B cell (primary cell): ENCODE measurements at regions of chr1 and their contacts with region 1.

Region 1: GRCh38 chr1:107804134-107804533 is 160.8 kb downstream of the VAV3 start:
- DNase-seq: peak; percentile 62
- ATAC-seq: peak; percentile 61
- H3K4me3 ChIP-seq: peak overlapping the region; percentile 35 to 76 (median 47)
- H3K4me3 Mint-ChIP-seq: peak overlapping the region; percentile 80
- H3K27ac ChIP-seq: peak overlapping the region; percentile 79 to 88
- H3K27ac Mint-ChIP-seq: peak overlapping the region; percentile 90
- H3K4me1 ChIP-seq: peaks cover 58 to 86% of the 10 kb centered on the region in 2 donors
- H3K4me1 Mint-ChIP-seq: peaks cover 91% of the 10 kb centered on the region
- H3K27me3 ChIP-seq: no peaks in the 10 kb centered on the region
- H3K27me3 Mint-ChIP-seq: no peaks in the 10 kb centered on the region
- CTCF ChIP-seq: no peak

Region 2: GRCh38 chr1:107789817-107790524 is 14.2 kb before region 1 on chr1:
- CTCF ChIA-PET with region 1: interaction called, 4 read pairs
- POLR2A ChIA-PET with region 1: interaction called, 3 read pairs
- intact Hi-C with region 1: loop called (anchors 1 kb)
- DNase-seq: no peak
- ATAC-seq: no peak
- H3K4me3 ChIP-seq: no peak overlapping the region
- H3K4me3 Mint-ChIP-seq: peak overlapping the region; percentile 4
- H3K27ac ChIP-seq: peak overlapping the region in 1 of 2 donors; percentile 12
- H3K27ac Mint-ChIP-seq: peak overlapping the region; percentile 55
- H3K4me1 ChIP-seq: peaks cover 84 to 94% of the 10 kb centered on the region in 2 donors
- H3K4me1 Mint-ChIP-seq: peaks cover 89% of the 10 kb centered on the region
- H3K27me3 ChIP-seq: no peaks in the 10 kb centered on the region
- H3K27me3 Mint-ChIP-seq: no peaks in the 10 kb centered on the region
- CTCF ChIP-seq: no peak

Region 3: DNA sequence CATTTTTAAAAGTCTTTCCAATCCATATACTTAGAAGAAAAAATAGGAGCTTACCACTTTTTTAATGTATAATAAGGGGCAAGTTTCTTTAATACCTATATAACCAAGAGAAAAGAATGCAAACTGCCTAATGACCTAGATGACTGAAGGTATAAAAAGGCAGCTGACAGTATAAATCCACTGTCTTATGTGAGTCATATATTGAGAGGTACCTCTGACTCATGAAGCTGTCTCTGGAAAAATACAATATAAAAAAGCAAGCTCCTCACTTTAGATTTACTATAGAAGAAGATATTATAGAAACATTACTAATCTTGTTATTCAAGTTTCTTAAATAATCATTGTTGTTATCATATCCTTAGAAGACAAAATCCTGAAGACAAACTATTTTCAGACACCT is 16.7 kb after region 1 on chr1:
- CTCF ChIA-PET with region 1: no interaction called
- POLR2A ChIA-PET with region 1: no interaction called
- intact Hi-C with region 1: loop called (anchors 2 kb)
- DNase-seq: no peak
- ATAC-seq: peak; percentile 21
- H3K4me3 ChIP-seq: no peak overlapping the region
- H3K4me3 Mint-ChIP-seq: no peak overlapping the region
- H3K27ac ChIP-seq: no peak overlapping the region
- H3K27ac Mint-ChIP-seq: no peak overlapping the region
- H3K4me1 ChIP-seq: peaks cover 19 to 36% of the 10 kb centered on the region in 2 donors
- H3K4me1 Mint-ChIP-seq: peaks cover 64% of the 10 kb centered on the region
- H3K27me3 ChIP-seq: no peaks in the 10 kb centered on the region
- H3K27me3 Mint-ChIP-seq: no peaks in the 10 kb centered on the region
- CTCF ChIP-seq: no peak

Region 4: DNA sequence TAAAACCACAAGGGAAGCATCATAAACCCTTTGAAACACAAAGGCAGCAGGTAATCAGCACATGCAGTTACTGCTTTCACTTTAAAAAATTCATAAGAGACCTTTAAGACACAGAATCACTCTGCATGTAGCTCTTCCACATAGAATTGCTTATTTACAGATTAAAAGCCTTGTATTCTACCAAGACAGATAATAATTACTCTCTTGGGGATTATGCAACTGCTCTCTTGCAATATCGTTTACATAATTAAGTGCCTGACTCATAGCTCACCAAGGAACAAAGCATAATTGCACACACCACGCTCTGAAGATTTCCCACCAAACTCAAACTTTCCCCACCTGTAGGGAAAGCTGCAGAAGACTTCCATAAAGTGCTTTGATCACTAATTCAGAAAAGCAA is 73.0 kb after region 1 on chr1:
- CTCF ChIA-PET with region 1: no interaction called
- POLR2A ChIA-PET with region 1: no interaction called
- intact Hi-C with region 1: loop called (anchors 2 kb)
- DNase-seq: no peak
- ATAC-seq: peak; percentile 53
- H3K4me3 ChIP-seq: peak overlapping the region in 1 of 5 experiments; percentile 17
- H3K4me3 Mint-ChIP-seq: peak overlapping the region; percentile 56
- H3K27ac ChIP-seq: no peak overlapping the region
- H3K27ac Mint-ChIP-seq: no peak overlapping the region
- H3K4me1 ChIP-seq: peaks cover 47 to 61% of the 10 kb centered on the region in 2 donors
- H3K4me1 Mint-ChIP-seq: peaks cover 77% of the 10 kb centered on the region
- H3K27me3 ChIP-seq: no peaks in the 10 kb centered on the region
- H3K27me3 Mint-ChIP-seq: no peaks in the 10 kb centered on the region
- CTCF ChIP-seq: no peak